ENCODE measurements at regions of chr16 and their contacts with region 1.

Region 1: GRCh38 chr16:53429221-53429943 is 4.9 kb upstream of the RBL2 start:
- DNase-seq: peak in 2 of 4 experiments; percentile 17 to 60
- ATAC-seq: peak; percentile 29
- H3K4me3 ChIP-seq: no peak overlapping the region
- H3K27ac ChIP-seq: peak overlapping the region; percentile 29; the same call in 1 of the 3 replicates
- H3K4me1 ChIP-seq: peaks cover 0 to 6% of the 10 kb centered on the region in 2 experiments
- H3K27me3 ChIP-seq: no peaks in the 10 kb centered on the region
- CTCF ChIP-seq: no peak
- EP300 ChIP-seq: no peak
- POLR2A ChIP-seq: no peak
- RAD21 ChIP-seq: no peak

Region 2: GRCh38 chr16:53415504-53415903 is 13.9 kb before region 1 on chr16:
- CTCF ChIA-PET with region 1: no interaction called
- POLR2A ChIA-PET with region 1: interaction called, 11 read pairs
- in situ Hi-C with region 1: no loop called
- intact Hi-C with region 1: no loop called
- DNase-seq: peak in 1 of 4 experiments; percentile 23
- ATAC-seq: 0 out of 3 replicates have a peak, but pooled peaks have one; percentile 40
- H3K4me3 ChIP-seq: no peak overlapping the region
- H3K27ac ChIP-seq: no peak overlapping the region
- H3K4me1 ChIP-seq: peaks cover 0 to 7% of the 10 kb centered on the region in 2 experiments; a peak in 2 of 5 replicates
- H3K27me3 ChIP-seq: peaks cover 4 to 12% of the 10 kb centered on the region in 2 experiments; a peak in 3 of 5 replicates
- CTCF ChIP-seq: peak; percentile 16 to 24 (median 21); a peak in 1 of 6 replicates
- EP300 ChIP-seq: no peak
- POLR2A ChIP-seq: no peak
- RAD21 ChIP-seq: peak in 1 of 2 experiments; percentile 39; a peak in 2 of 4 replicates

Region 3: DNA sequence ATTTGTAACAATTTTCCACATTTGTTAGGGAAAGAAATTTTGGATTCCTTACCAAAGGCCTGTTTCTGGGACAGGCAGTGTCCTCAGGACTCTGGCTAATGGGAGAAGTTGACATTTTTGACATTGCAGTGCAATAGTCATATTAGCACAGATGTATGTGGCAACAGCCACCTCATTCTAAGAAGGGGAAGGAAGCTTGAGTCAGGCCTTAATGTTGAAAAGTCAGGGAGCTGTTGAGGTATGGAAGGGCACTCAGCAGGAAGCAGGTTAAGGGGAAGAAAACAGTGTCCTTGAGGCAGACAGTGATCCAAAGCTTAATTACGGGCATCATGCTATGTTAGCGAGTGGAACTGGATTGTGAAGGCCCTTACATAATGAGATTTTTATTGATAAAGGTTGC is 52.7 kb after region 1 on chr16:
- CTCF ChIA-PET with region 1: no interaction called
- POLR2A ChIA-PET with region 1: no interaction called
- in situ Hi-C with region 1: no loop called
- intact Hi-C with region 1: no loop called
- DNase-seq: no peak
- ATAC-seq: no peak
- H3K4me3 ChIP-seq: no peak overlapping the region
- H3K27ac ChIP-seq: no peak overlapping the region; the same call in 2 of the 3 replicates
- H3K4me1 ChIP-seq: no peaks in the 10 kb centered on the region
- H3K27me3 ChIP-seq: no peaks in the 10 kb centered on the region
- CTCF ChIP-seq: no peak
- EP300 ChIP-seq: no peak
- POLR2A ChIP-seq: no peak
- RAD21 ChIP-seq: no peak

Region 4: GRCh38 chr16:53503270-53503923 is 74.0 kb after region 1 on chr16:
- CTCF ChIA-PET with region 1: no interaction called
- POLR2A ChIA-PET with region 1: no interaction called
- in situ Hi-C with region 1: no loop called
- intact Hi-C with region 1: loop called (anchors 5 kb)
- DNase-seq: peak; percentile 98 to 100 (median 99)
- ATAC-seq: peak; percentile 96
- H3K4me3 ChIP-seq: peak overlapping the region; percentile 72
- H3K27ac ChIP-seq: peak overlapping the region; percentile 60
- H3K4me1 ChIP-seq: peaks cover 7 to 16% of the 10 kb centered on the region in 2 experiments; a peak in 4 of 5 replicates
- H3K27me3 ChIP-seq: no peaks in the 10 kb centered on the region; a peak in 1 of 5 replicates
- CTCF ChIP-seq: 0 out of 6 replicates have a peak, but pooled peaks of 1 of the 3 experiments have one; percentile 3
- EP300 ChIP-seq: no peak
- POLR2A ChIP-seq: peak; percentile 83
- RAD21 ChIP-seq: no peak

Measured in K562 (cell line).